ENCODE measurements at regions of chr2 and their contacts with region 1.

Region 1: GRCh38 chr2:46461011-46461674 is 18.2 kb upstream of the TMEM247 start:
- DNase-seq: peak; percentile 70
- ATAC-seq: peak; percentile 73
- H3K4me3 ChIP-seq: peak overlapping the region in 2 of 3 experiments; percentile 12 to 20; a peak in 3 of 6 replicates
- H3K27ac ChIP-seq: no peak overlapping the region
- H3K4me1 ChIP-seq: peaks cover 46% of the 10 kb centered on the region
- H3K27me3 ChIP-seq: peaks cover 0 to 14% of the 10 kb centered on the region in 2 experiments; a peak in 1 of 5 replicates
- CTCF ChIP-seq: peak; percentile 98
- EP300 ChIP-seq: no peak
- POLR2A ChIP-seq: no peak
- RAD21 ChIP-seq: peak; percentile 98

Region 2: GRCh38 chr2:45993476-45993991 is 467.6 kb before region 1 on chr2:
- CTCF ChIA-PET with region 1: interaction called, 7 read pairs
- POLR2A ChIA-PET with region 1: no interaction called
- in situ Hi-C with region 1: no loop called
- intact Hi-C with region 1: loop called (anchors 1 kb)
- DNase-seq: peak; percentile 78
- ATAC-seq: peak; percentile 56
- H3K4me3 ChIP-seq: peak overlapping the region in 2 of 3 experiments; percentile 13 to 59; a peak in 3 of 6 replicates
- H3K27ac ChIP-seq: peak overlapping the region; percentile 72
- H3K4me1 ChIP-seq: peaks cover 36% of the 10 kb centered on the region
- H3K27me3 ChIP-seq: no peaks in the 10 kb centered on the region
- CTCF ChIP-seq: peak; percentile 87
- EP300 ChIP-seq: peak in 1 of 2 experiments; percentile 15; a peak in 1 of 4 replicates
- POLR2A ChIP-seq: no peak
- RAD21 ChIP-seq: peak; percentile 76

Region 3: DNA sequence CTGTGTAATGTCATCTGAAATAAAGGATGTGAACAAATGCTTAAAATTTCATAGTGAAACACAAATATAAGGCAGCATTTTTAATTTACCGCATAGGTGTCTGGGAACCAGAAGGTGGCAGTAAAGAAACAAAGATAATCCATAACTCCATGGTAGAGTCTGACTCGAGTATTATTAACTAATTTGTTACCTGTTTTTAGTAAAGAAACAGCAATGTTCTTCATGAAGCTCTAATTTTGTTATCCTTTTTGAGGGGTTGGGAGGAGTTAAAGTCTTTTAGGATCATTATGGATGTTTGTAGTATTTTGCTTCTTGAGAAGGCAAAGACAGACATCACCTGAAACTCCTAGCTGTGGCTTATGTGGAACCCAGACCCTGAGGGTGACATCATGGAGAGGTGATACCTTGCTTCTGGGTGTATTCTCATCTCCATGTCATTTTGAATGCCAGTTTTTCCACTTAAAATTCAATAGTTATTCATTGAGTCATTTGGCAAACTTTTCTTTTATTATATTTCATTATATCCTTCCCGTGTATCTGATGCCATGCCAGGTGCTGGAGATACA is 450.1 kb before region 1 on chr2:
- CTCF ChIA-PET with region 1: interaction called, 17 read pairs
- POLR2A ChIA-PET with region 1: no interaction called
- in situ Hi-C with region 1: no loop called
- intact Hi-C with region 1: loop called (anchors 1 kb)
- DNase-seq: peak; percentile 47
- ATAC-seq: peak; percentile 83
- H3K4me3 ChIP-seq: no peak overlapping the region
- H3K27ac ChIP-seq: no peak overlapping the region
- H3K4me1 ChIP-seq: peaks cover 8% of the 10 kb centered on the region; the same call in 1 of the 2 replicates
- H3K27me3 ChIP-seq: no peaks in the 10 kb centered on the region
- CTCF ChIP-seq: peak; percentile 73
- EP300 ChIP-seq: no peak
- POLR2A ChIP-seq: no peak
- RAD21 ChIP-seq: peak; percentile 53

Region 4: DNA sequence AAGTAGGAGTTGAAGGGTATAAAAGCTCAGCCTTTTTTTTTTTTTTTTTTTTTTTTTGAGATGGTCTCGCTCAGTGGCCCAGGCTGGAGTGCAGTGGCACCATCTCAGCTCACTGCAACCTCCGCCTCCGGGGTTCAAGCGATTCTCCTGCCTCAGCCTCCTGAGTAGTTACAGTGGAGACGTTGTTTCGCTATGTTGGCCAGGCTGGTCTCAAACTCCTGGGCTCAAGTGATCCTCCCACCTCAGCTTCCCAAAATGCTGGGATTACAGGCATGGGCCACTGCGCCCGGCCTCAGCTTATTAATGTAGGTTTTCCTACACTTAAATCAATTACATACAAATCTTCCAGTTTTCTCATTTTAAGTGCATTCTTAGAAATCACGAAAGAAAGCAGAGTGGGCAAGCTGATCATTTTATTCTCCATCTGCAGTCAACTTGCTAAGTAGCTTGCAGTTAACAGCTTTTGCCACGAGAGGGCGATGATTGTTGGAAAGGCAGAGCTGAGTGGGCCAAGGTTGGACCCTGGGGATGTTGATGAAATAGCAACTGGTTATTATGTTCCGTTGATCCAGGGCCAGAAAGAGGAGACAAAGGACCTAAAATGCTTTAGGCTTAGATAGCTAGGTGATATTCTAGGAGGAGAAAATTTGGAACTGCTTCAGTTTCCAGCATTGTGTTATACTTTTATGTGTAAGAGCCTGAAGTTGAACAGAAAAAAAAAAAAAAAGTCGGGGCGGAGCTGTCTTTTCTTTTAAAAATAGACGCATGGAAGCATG is 398.3 kb before region 1 on chr2:
- CTCF ChIA-PET with region 1: interaction called, 22 read pairs
- POLR2A ChIA-PET with region 1: no interaction called
- in situ Hi-C with region 1: no loop called
- intact Hi-C with region 1: loop called (anchors 1 kb)
- DNase-seq: peak; percentile 80
- ATAC-seq: peak; percentile 91
- H3K4me3 ChIP-seq: no peak overlapping the region
- H3K27ac ChIP-seq: no peak overlapping the region
- H3K4me1 ChIP-seq: peaks cover 6% of the 10 kb centered on the region; the same call in 1 of the 2 replicates
- H3K27me3 ChIP-seq: no peaks in the 10 kb centered on the region
- CTCF ChIP-seq: peak; percentile 93
- EP300 ChIP-seq: no peak
- POLR2A ChIP-seq: no peak
- RAD21 ChIP-seq: peak; percentile 89

Region 5: DNA sequence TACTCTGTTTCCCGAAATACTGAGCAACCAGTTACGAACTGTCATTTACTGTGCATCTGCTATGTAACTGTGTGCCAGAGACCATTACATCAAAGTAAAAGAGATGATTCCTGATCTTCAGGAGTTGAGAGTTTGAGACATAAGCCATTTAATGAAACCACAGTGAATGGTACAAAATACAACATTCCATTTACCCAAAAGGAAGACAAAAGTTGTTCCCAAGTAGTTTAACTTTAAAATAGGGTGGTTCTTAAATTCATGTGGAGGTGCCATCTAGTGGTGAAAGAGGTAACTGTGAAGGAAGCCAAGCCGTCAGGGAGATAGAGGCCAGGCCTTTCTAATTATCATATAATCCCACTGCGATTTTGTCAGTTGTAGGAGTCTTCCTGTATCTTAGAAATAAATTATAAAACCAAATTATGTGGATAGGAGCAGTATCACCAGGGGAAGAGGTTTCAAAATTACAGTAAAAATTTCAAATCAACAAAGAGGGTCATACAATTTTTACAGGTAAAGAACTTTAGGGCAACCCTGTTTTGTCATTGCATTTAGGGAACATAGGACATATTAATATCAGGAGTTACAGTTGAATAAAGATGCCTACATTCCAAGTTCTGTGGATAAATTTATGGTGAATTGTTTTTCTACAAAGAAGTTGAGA is 96.2 kb before region 1 on chr2:
- CTCF ChIA-PET with region 1: interaction called, 20 read pairs
- POLR2A ChIA-PET with region 1: no interaction called
- in situ Hi-C with region 1: no loop called
- intact Hi-C with region 1: loop called (anchors 1 kb)
- DNase-seq: peak; percentile 57
- ATAC-seq: peak; percentile 48
- H3K4me3 ChIP-seq: no peak overlapping the region
- H3K27ac ChIP-seq: no peak overlapping the region
- H3K4me1 ChIP-seq: no peaks in the 10 kb centered on the region
- H3K27me3 ChIP-seq: no peaks in the 10 kb centered on the region
- CTCF ChIP-seq: peak; percentile 83
- EP300 ChIP-seq: no peak
- POLR2A ChIP-seq: no peak
- RAD21 ChIP-seq: peak; percentile 75

Region 6: GRCh38 chr2:46372475-46372874 is 88.7 kb before region 1 on chr2:
- CTCF ChIA-PET with region 1: no interaction called
- POLR2A ChIA-PET with region 1: no interaction called
- in situ Hi-C with region 1: no loop called
- intact Hi-C with region 1: loop called (anchors 2 kb)
- DNase-seq: no peak
- ATAC-seq: no peak
- H3K4me3 ChIP-seq: no peak overlapping the region
- H3K27ac ChIP-seq: peak overlapping the region; percentile 13
- H3K4me1 ChIP-seq: peaks cover 23% of the 10 kb centered on the region
- H3K27me3 ChIP-seq: no peaks in the 10 kb centered on the region
- CTCF ChIP-seq: no peak
- EP300 ChIP-seq: no peak
- POLR2A ChIP-seq: no peak
- RAD21 ChIP-seq: no peak

Region 7: DNA sequence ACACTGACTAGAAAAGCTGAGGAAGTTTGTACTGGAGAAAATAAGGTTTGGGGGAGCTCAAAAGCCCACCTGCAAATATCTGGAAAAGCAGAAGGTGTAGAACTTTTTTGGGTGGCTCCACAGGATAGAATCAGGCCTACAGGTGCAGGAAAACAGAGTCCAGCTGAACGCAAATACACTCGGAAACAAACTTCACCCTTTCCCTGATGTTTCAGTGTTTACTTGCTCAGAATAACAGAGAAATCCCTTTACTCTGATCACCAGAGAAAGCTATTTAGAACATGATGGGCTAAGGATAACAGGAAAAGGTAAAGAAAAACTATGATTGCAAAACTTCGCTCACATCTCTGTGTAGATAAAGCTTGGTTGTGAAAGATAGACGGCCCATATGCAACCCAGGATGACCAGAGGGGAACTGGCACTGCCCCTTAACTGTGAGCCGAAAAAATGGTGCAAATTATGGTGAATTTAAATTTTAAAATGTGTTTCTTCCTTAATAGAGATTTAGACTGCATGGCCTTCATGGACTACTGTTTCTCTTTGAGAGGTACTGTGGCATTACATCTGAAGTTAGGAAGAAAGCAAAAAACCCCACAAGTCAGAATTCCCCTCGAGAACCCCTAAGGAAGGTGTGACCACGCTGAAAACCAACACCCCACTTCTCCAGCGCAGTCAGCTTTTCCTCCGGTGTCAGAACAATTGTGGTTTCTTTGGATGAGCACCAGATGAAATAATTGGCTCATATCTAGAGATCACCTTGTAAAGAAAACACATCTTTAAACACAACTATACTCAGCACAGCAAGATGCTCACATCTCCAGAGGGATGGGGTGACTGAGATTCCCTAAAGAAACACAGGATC is 66.3 kb before region 1 on chr2:
- CTCF ChIA-PET with region 1: interaction called, 5 read pairs
- POLR2A ChIA-PET with region 1: interaction called, 3 read pairs
- in situ Hi-C with region 1: no loop called
- intact Hi-C with region 1: loop called (anchors 2 kb)
- DNase-seq: peak; percentile 92
- ATAC-seq: peak; percentile 87
- H3K4me3 ChIP-seq: peak overlapping the region in 2 of 3 experiments; percentile 17 to 29; a peak in 3 of 6 replicates
- H3K27ac ChIP-seq: peak overlapping the region; percentile 60
- H3K4me1 ChIP-seq: peaks cover 47% of the 10 kb centered on the region
- H3K27me3 ChIP-seq: no peaks in the 10 kb centered on the region
- CTCF ChIP-seq: no peak
- EP300 ChIP-seq: peak; percentile 53 to 93; a peak in 3 of 4 replicates
- POLR2A ChIP-seq: no peak
- RAD21 ChIP-seq: no peak

Measured in HepG2 (cell line).